A549 (cell line): ENCODE measurements at regions of chr12 and their contacts with region 1.

Region 1: DNA sequence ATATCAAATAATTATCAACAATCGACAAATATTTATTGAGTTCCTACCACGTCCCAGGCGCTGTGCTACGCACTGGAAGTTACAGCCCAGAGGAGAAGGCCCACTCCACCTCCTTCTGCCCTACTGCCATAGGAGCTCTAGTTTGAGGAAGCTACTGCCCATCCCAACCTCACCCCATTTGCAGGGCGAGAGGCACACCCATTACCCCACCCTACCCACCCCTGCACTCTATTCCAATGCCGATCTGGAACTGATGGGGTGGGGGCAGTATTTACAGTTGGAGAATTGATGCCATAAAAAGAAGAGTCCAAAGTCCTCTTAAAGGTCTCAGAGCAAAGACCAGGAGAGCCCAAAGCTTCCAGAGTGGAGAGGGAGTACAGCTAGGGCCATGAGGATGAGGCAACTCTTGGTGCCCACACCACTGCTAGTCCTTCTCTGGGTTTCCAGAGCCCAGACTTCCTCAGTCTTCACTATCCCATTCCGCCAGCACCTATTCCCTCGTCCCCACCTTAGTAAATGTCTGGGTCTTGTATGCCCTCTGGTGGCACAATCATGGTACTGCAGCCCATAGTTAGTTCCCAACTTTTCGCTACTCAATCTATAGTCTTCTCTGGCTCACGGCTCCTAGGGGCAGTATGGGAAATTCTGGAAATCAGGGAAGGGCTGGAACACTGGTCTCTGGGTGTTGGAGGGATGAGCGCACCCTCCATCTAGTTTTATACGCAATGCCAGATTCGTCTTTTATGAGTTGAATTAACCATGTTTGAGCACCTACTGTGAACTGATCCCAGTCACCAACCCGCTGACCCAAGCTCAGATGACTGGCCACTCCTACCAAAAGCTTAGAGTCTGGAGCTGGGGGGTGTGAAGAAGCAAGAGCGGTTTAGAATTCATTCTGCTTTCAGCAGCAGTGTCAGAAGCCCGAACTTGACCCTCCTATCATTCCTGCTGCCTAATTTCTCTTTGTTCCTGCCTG is 6.9 kb upstream of the ADCY6 start:
- DNase-seq: peak; percentile 87 to 96
- ATAC-seq: peak; percentile 89 to 95
- H3K4me3 ChIP-seq: no peak overlapping the region
- H3K27ac ChIP-seq: peak overlapping the region in 1 of 2 experiments; percentile 39; a peak in 1 of 6 replicates
- H3K4me1 ChIP-seq: peaks cover 9% of the 10 kb centered on the region
- CTCF ChIP-seq: peak; percentile 94
- EP300 ChIP-seq: no peak
- POLR2A ChIP-seq: no peak
- RAD21 ChIP-seq: peak; percentile 96 to 99

Region 2: GRCh38 chr12:48739618-48740273 is 56.0 kb before region 1 on chr12:
- CTCF ChIA-PET with region 1: interaction called, 14 read pairs
- POLR2A ChIA-PET with region 1: no interaction called
- DNase-seq: no peak
- ATAC-seq: no peak
- H3K4me3 ChIP-seq: no peak overlapping the region
- H3K27ac ChIP-seq: no peak overlapping the region
- H3K4me1 ChIP-seq: no peaks in the 10 kb centered on the region
- CTCF ChIP-seq: no peak
- EP300 ChIP-seq: no peak
- POLR2A ChIP-seq: no peak
- RAD21 ChIP-seq: no peak

Region 3: DNA sequence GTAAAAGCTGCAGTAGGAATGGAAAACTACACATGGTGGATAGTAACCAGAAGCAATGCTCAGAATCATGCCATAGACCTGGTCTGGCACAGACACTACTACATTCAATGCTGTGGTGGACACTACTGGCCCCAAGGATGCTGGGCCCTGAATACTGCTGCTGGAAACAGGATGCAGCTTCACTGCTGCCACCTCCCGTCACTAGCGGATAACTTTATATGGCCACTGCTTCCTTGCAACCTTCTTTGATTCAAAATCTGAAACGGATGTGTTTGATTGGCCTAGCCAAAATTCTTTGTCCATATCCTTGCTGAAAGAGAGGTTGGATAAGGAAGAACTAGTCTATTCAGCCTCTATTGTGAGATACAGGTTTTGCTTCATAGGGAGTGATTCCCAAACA is 37.5 kb before region 1 on chr12:
- CTCF ChIA-PET with region 1: interaction called, 265 read pairs
- POLR2A ChIA-PET with region 1: interaction called, 14 read pairs
- DNase-seq: peak in 1 of 2 experiments; percentile 29
- ATAC-seq: peak; percentile 57 to 64; a peak in 4 of 6 replicates
- H3K4me3 ChIP-seq: no peak overlapping the region
- H3K27ac ChIP-seq: no peak overlapping the region
- H3K4me1 ChIP-seq: no peaks in the 10 kb centered on the region
- CTCF ChIP-seq: no peak
- EP300 ChIP-seq: no peak
- POLR2A ChIP-seq: no peak
- RAD21 ChIP-seq: no peak

Region 4: GRCh38 chr12:48773686-48774085 is 22.1 kb before region 1 on chr12:
- CTCF ChIA-PET with region 1: interaction called, 61 read pairs
- POLR2A ChIA-PET with region 1: no interaction called
- DNase-seq: no peak
- ATAC-seq: no peak
- H3K4me3 ChIP-seq: no peak overlapping the region
- H3K27ac ChIP-seq: no peak overlapping the region
- H3K4me1 ChIP-seq: no peaks in the 10 kb centered on the region
- CTCF ChIP-seq: no peak
- EP300 ChIP-seq: no peak
- POLR2A ChIP-seq: no peak
- RAD21 ChIP-seq: no peak

Region 5: GRCh38 chr12:48814262-48815125 is 18.7 kb after region 1 on chr12:
- CTCF ChIA-PET with region 1: interaction called, 225 read pairs
- POLR2A ChIA-PET with region 1: interaction called, 3 read pairs
- DNase-seq: peak; percentile 82 to 87
- ATAC-seq: peak; percentile 69 to 84
- H3K4me3 ChIP-seq: peak overlapping the region; percentile 81
- H3K27ac ChIP-seq: peak overlapping the region; percentile 93 to 95
- H3K4me1 ChIP-seq: peaks cover 48% of the 10 kb centered on the region
- CTCF ChIP-seq: peak; percentile 99
- EP300 ChIP-seq: no peak
- POLR2A ChIP-seq: peak; percentile 46
- RAD21 ChIP-seq: peak; percentile 43 to 62; a peak in 4 of 5 replicates